K562 (cell line): ENCODE measurements at regions of chr10 and their contacts with region 1.

Region 1: GRCh38 chr10:80122746-80123145 is 9.8 kb upstream of the PLAC9 start:
- DNase-seq: no peak
- ATAC-seq: no peak
- H3K4me3 ChIP-seq: no peak overlapping the region
- H3K27ac ChIP-seq: no peak overlapping the region
- H3K4me1 ChIP-seq: no peaks in the 10 kb centered on the region
- H3K27me3 ChIP-seq: peaks cover 8 to 13% of the 10 kb centered on the region in 2 experiments
- CTCF ChIP-seq: no peak
- EP300 ChIP-seq: no peak
- POLR2A ChIP-seq: no peak
- RAD21 ChIP-seq: no peak

Region 2: GRCh38 chr10:79938728-79939406 is 183.9 kb before region 1 on chr10:
- CTCF ChIA-PET with region 1: no interaction called
- POLR2A ChIA-PET with region 1: no interaction called
- in situ Hi-C with region 1: no loop called
- intact Hi-C with region 1: loop called (anchors 10 kb)
- DNase-seq: peak in 1 of 4 experiments; percentile 17
- ATAC-seq: no peak
- H3K4me3 ChIP-seq: no peak overlapping the region
- H3K27ac ChIP-seq: no peak overlapping the region
- H3K4me1 ChIP-seq: no peaks in the 10 kb centered on the region
- H3K27me3 ChIP-seq: peaks cover 27 to 78% of the 10 kb centered on the region in 2 experiments; a peak in 4 of 5 replicates
- CTCF ChIP-seq: no peak
- EP300 ChIP-seq: no peak
- POLR2A ChIP-seq: no peak
- RAD21 ChIP-seq: no peak